GM10248 (cell line): ENCODE measurements at regions of chr14 and their contacts with region 1.

Region 1: GRCh38 chr14:106538201-106538600 is 1011.8 kb downstream of the TMEM121 start:
- DNase-seq: no peak
- CTCF ChIP-seq: no peak

Region 2: DNA sequence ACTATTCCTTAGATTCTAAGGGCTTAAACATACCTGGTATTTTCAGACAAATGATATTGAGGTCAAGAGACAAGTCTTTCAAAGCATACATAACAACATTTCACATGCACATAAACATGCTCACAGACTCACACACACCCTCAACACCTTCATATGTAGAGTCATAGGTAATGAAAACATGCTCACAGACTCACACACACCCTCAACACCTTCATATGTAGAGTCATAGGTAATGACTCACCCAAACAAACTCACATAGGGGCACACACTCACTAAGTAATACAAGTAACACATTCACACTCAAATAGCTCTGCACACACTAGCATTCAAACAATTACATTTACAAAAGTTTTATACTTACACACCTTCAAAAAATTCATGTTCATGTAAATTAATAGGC is 36.3 kb before region 1 on chr14:
- CTCF ChIA-PET with region 1: interaction called, 126 read pairs
- POLR2A ChIA-PET with region 1: no interaction called
- DNase-seq: no peak
- CTCF ChIP-seq: no peak

Region 3: GRCh38 chr14:106556665-106557289 is 18.6 kb after region 1 on chr14:
- CTCF ChIA-PET with region 1: interaction called, 235 read pairs
- POLR2A ChIA-PET with region 1: no interaction called
- DNase-seq: peak; percentile 45
- CTCF ChIP-seq: peak; percentile 98

Region 4: GRCh38 chr14:106564058-106564656 is 26.0 kb after region 1 on chr14:
- CTCF ChIA-PET with region 1: interaction called, 235 read pairs
- POLR2A ChIA-PET with region 1: no interaction called
- DNase-seq: peak; percentile 62
- CTCF ChIP-seq: peak; percentile 87

Region 5: DNA sequence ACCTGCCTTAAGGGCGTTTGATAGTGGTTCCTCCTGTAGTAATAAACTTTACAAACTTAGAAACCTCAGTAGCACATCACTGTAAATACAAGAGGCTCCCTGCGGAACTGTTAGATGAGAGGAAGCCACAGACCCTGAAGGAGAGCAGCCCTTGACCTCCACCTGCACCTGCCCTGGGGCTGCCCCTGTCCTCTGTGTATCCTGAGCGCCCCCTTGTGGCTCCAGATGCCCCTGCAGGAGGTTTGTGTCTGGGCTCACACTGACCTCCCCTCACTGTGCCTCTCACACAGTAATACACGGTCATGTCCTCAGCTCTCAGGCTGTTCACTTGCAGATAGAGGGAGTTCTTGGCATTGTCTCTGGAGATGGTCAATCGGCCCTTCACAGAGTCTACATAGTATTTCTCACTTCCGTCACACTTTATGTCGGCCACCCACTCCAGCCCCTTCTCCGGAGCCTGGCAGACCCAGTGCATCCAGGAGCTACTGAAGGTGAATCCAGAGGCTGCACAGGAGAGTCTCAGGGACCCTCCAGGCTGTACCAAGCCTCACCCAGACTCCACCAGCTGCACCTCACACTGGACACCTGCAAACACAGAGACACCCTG is 48.0 kb after region 1 on chr14:
- CTCF ChIA-PET with region 1: interaction called, 10 read pairs
- POLR2A ChIA-PET with region 1: no interaction called
- DNase-seq: peak; percentile 75
- CTCF ChIP-seq: peak; percentile 85

Region 6: GRCh38 chr14:106599209-106599608 is 61.0 kb after region 1 on chr14:
- CTCF ChIA-PET with region 1: interaction called, 18 read pairs
- POLR2A ChIA-PET with region 1: no interaction called
- DNase-seq: no peak
- CTCF ChIP-seq: no peak

Region 7: GRCh38 chr14:106605548-106606448 is 67.6 kb after region 1 on chr14:
- CTCF ChIA-PET with region 1: interaction called, 18 read pairs
- POLR2A ChIA-PET with region 1: interaction called, 3 read pairs
- DNase-seq: peak; percentile 74
- CTCF ChIP-seq: peak; percentile 90

Region 8: GRCh38 chr14:106778986-106779385 is 240.8 kb after region 1 on chr14:
- CTCF ChIA-PET with region 1: no interaction called
- POLR2A ChIA-PET with region 1: no interaction called
- DNase-seq: no peak
- CTCF ChIP-seq: no peak